Esophagus squamous epithelium (tissue), 5 donors: ENCODE measurements at regions of chr17 and their contacts with region 1.

Region 1: GRCh38 chr17:41648411-41649195 is 24.2 kb upstream of the KRT17 start:
- DNase-seq: peak; percentile 21
- H3K4me3 ChIP-seq: peak overlapping the region; percentile 1 to 67 (median 42)
- H3K27ac ChIP-seq: peak overlapping the region; percentile 95 to 98 (median 97)
- H3K4me1 ChIP-seq: peaks cover 34 to 80% (median 53%) of the 10 kb centered on the region in 3 donors
- H3K27me3 ChIP-seq: no peaks in the 10 kb centered on the region
- CTCF ChIP-seq: peak; percentile 90 to 99 (median 96)
- POLR2A ChIP-seq: no peak

Region 2: DNA sequence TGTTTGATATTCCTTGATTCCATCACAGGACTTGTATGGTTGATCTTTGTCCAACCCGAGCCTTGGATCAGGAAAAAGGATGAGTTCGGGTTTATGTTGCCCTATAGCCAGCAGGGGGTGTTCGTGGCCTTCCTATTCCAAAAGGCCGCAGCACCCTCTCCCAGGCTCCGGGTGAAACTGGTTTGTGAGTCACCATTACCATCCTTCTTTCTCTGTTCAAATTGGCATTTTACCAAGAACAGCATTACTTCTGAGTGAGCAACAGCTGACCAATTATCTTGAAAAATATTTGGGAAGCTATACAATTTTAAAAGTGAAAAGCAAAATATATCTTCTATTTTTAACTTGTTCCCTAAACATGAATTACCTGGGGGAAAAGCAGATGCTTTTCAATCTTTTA is 739.3 kb before region 1 on chr17:
- intact Hi-C with region 1: loop called (anchors 5 kb)
- DNase-seq: peak; percentile 27
- H3K4me3 ChIP-seq: no peak overlapping the region
- H3K27ac ChIP-seq: peak overlapping the region; percentile 58 to 86 (median 70)
- H3K4me1 ChIP-seq: peaks cover 8 to 40% (median 12%) of the 10 kb centered on the region in 3 donors
- H3K27me3 ChIP-seq: peaks cover 0 to 15% (median 0%) of the 10 kb centered on the region in 4 donors
- CTCF ChIP-seq: peak; percentile 49 to 91 (median 86)
- POLR2A ChIP-seq: no peak

Region 3: DNA sequence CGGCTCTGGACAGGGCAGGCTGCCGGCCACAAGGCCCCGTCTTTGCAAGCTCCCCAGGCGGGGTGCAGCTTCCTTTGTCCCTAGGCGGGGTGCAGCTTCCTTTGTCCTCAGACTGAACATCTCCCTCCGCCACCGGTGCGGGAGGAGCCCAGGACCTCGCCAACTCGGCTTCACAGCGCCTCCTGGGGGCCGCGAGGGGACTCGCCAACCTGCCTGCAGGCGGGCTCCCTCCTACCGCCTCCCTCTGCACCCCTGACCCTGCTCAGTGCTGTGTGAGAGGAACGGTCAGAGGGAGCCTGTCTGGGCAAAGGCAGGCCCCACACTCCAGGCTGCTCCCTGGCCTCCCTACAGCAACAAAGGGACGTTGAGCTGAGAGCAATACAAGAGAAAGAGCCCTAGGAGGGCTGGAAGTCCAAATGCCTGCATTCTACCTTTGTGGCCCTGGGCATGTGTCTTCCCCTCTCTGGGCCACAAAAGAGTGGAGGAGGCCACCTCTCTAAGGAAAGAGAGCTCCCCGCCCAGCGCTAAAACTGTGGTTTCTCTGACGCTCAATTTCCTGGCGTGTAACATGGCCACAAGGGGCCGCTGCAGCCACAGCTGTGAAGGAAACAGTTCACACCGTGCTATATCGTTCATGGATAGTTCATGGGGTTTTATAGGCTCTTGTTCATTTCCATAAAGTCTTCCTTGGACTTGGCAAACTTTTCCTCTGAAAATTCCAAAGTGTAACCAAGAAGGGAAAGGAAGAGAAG is 99.6 kb before region 1 on chr17:
- intact Hi-C with region 1: loop called (anchors 10 kb)
- DNase-seq: no peak
- H3K4me3 ChIP-seq: peak overlapping the region; percentile 5 to 60 (median 37)
- H3K27ac ChIP-seq: peak overlapping the region; percentile 86 to 93 (median 88)
- H3K4me1 ChIP-seq: peaks cover 22 to 47% (median 31%) of the 10 kb centered on the region in 3 donors
- H3K27me3 ChIP-seq: no peaks in the 10 kb centered on the region
- CTCF ChIP-seq: peak; percentile 79 to 93 (median 86)
- POLR2A ChIP-seq: peak in 1 of 4 donors; percentile 21

Region 4: GRCh38 chr17:41579484-41580243 is 68.9 kb before region 1 on chr17:
- intact Hi-C with region 1: loop called (anchors 5 kb)
- DNase-seq: no peak
- H3K4me3 ChIP-seq: peak overlapping the region in 1 of 4 donors; percentile 6
- H3K27ac ChIP-seq: peak overlapping the region; percentile 50 to 81 (median 66)
- H3K4me1 ChIP-seq: peaks cover 0 to 67% (median 19%) of the 10 kb centered on the region in 3 donors
- H3K27me3 ChIP-seq: peaks cover 0 to 55% (median 0%) of the 10 kb centered on the region in 4 donors
- CTCF ChIP-seq: peak; percentile 50 to 98 (median 90)
- POLR2A ChIP-seq: peak in 3 of 4 donors; percentile 12 to 67 (median 63)